ENCODE measurements at regions of chr19 and their contacts with region 1.

Region 1: GRCh38 chr19:11155373-11156120 is at the start of gene SPC24:
- DNase-seq: peak; percentile 94
- ATAC-seq: peak; percentile 99
- H3K4me3 ChIP-seq: peak within 1 kb of the TSS; percentile 95
- H3K27ac ChIP-seq: peak within 1 kb of the TSS; percentile 91
- H3K4me1 ChIP-seq: no peaks in the 10 kb centered on the region; the same call in 1 of the 2 replicates
- H3K27me3 ChIP-seq: no peaks in the 10 kb centered on the region
- CTCF ChIP-seq: 0 out of 6 replicates have a peak, but pooled peaks of 1 of the 3 experiments have one; percentile 3
- EP300 ChIP-seq: no peak
- POLR2A ChIP-seq: peak; percentile 94
- RAD21 ChIP-seq: no peak
- polyA plus RNA-seq, gene SPC24: 9.4 to 18.4 TPM

Region 2: DNA sequence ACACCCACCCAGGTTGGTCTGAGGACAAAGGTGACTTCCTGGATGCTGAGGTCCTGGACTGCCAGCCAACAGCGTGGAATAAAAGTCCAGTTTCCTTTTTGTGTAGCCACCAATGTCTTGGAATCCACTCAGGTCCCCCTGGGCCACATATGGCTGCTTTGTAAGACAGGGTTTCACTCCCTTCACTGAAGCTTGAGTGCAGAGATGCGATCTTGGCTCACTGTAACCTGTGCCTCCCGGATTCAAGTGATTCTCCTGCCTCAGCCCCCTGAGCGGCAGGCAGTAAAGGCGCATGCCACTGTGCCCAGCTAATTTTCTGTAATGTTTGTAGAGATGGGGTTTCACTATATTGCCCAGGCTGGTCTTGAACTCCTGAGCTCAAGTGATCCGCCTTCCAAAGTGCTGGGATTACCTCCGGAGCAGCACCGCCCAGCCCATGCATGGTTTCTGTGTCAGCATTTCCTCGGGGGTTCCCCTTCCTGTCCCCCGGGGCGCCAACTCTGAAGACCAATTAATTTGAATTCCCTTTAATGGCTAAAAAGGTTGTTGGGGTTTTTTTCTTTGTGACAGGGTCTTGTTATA is 24.3 kb after region 1 on chr19:
- CTCF ChIA-PET with region 1: no interaction called
- POLR2A ChIA-PET with region 1: interaction called, 12 read pairs
- RAD21 ChIA-PET with region 1: no interaction called
- SMC1A ChIA-PET with region 1: interaction called, 3 read pairs
- in situ Hi-C with region 1: no loop called
- intact Hi-C with region 1: no loop called
- DNase-seq: peak; percentile 59
- ATAC-seq: peak; percentile 94
- H3K4me3 ChIP-seq: peak overlapping the region; percentile 62
- H3K27ac ChIP-seq: peak overlapping the region; percentile 86
- H3K4me1 ChIP-seq: peaks cover 20% of the 10 kb centered on the region
- H3K27me3 ChIP-seq: no peaks in the 10 kb centered on the region
- CTCF ChIP-seq: no peak
- EP300 ChIP-seq: no peak
- POLR2A ChIP-seq: peak; percentile 52
- RAD21 ChIP-seq: no peak

Region 3: DNA sequence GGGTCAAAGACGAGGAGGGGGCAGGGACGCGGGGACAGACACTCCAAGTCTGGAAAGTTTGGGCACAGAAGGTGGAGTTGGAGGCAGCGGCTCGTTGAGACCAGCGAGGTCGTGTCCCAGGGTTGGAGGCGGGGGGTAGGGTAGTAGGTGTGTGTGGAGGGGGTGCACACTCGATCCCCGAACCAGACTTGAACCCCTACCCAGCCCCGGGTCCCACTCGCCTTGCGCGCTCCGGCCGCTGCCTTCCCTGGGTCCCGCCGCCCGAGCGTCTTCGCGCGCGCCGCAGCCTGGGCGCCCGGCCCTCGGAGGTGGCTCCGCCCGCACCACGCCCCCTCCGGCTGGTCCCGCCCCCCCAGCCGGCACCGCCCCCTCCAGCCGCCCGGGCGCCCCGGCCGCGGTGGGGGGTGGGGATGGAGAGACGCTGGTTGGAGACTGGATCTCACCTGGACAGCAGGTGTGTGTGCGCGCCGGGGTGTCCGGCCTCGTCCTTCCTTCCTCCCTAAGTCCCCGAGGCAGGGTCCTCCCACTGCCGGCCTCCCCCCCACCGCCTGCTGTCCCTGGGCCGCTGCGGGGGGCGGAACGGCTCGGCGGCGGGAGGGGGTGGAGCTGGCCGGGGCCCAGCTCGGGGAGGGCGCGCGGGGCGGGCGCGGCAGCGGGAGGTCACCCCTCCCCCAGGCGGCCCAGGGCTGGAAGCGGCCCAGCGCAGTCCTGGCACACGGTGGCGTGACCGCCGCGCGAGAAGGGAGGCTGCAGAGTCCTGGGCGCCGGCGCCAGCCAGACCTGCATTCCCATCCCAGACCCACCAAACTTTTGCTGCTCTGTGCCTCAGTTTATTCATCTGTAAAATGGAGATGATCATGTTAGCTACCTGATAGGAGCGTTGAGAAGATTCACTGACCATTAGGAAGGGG is 42.0 kb after region 1 on chr19 and contains the start of gene KANK2:
- CTCF ChIA-PET with region 1: interaction called, 3 read pairs
- POLR2A ChIA-PET with region 1: no interaction called
- RAD21 ChIA-PET with region 1: no interaction called
- SMC1A ChIA-PET with region 1: interaction called, 7 read pairs
- in situ Hi-C with region 1: no loop called
- intact Hi-C with region 1: loop called (anchors 2 kb)
- DNase-seq: peak; percentile 13
- ATAC-seq: peak; percentile 93
- H3K4me3 ChIP-seq: peak within 1 kb of the TSS; percentile 97
- H3K27ac ChIP-seq: peak within 1 kb of the TSS; percentile 42
- H3K4me1 ChIP-seq: peaks cover 11% of the 10 kb centered on the region
- H3K27me3 ChIP-seq: no peaks in the 10 kb centered on the region
- CTCF ChIP-seq: peak in 2 of 3 experiments; percentile 2 to 29; a peak in 2 of 6 replicates
- EP300 ChIP-seq: no peak
- POLR2A ChIP-seq: peak; percentile 76
- RAD21 ChIP-seq: no peak
- polyA plus RNA-seq, gene KANK2: 4.9 to 7.3 TPM

Measured in GM12878 (cell line).